ENCODE measurements at regions of chr12 and their contacts with region 1.

Region 1: DNA sequence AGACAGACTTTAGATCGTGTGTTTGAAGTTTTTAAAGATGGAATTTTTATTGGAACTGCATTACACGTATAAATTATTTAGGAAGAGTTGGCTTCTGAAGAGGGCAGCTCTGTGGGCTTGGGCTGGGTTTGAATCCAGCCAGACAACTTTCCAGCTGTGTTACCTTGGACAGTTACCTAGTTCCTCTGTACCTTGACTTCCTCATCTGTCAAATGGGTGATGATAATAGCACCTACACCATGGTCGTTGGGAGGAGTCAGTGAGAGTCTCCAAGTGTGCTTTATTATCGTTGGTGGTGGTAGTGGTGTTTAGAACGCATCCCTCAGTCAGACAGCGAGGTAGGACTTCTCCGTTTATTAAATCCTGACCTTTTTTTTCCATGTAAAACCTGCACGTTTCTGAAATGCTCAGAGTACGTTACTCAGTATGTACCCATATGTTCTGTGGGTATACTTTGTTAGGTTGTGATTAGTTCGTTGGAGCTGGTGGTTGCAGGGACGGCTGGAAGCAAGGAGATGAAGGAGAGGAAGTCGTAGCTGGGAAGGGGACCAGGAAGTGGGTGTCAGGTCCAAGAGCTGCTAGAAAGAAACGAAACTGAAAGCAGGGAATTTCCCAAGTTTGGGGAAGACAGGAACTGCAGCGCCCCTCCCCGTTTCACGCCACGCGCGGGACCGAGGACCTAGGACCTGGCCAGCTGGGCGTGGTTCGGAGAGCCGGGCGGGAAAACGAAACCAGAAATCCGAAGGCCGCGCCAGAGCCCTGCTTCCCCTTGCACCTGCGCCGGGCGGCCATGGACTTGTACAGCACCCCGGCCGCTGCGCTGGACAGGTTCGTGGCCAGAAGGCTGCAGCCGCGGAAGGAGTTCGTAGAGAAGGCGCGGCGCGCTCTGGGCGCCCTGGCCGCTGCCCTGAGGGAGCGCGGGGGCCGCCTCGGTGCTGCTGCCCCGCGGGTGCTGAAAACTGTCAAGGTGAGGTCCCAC is at the start of gene OAS3:
- DNase-seq: peak; percentile 66 to 87 (median 70)
- H3K4me3 ChIP-seq: peak within 1 kb of the TSS; percentile 72 to 84
- H3K4me3 Mint-ChIP-seq: peak within 1 kb of the TSS; percentile 87 to 100 (median 94)
- H3K27ac ChIP-seq: peak within 1 kb of the TSS; percentile 72
- H3K27ac Mint-ChIP-seq: peak within 1 kb of the TSS; percentile 85 to 98 (median 96)
- H3K4me1 ChIP-seq: peaks cover 35% of the 10 kb centered on the region
- H3K4me1 Mint-ChIP-seq: peaks cover 28 to 45% (median 36%) of the 10 kb centered on the region in 4 donors
- H3K27me3 ChIP-seq: no peaks in the 10 kb centered on the region
- H3K27me3 Mint-ChIP-seq: no peaks in the 10 kb centered on the region
- total RNA-seq, gene OAS3: 20.3 to 22.5 TPM

Region 2: DNA sequence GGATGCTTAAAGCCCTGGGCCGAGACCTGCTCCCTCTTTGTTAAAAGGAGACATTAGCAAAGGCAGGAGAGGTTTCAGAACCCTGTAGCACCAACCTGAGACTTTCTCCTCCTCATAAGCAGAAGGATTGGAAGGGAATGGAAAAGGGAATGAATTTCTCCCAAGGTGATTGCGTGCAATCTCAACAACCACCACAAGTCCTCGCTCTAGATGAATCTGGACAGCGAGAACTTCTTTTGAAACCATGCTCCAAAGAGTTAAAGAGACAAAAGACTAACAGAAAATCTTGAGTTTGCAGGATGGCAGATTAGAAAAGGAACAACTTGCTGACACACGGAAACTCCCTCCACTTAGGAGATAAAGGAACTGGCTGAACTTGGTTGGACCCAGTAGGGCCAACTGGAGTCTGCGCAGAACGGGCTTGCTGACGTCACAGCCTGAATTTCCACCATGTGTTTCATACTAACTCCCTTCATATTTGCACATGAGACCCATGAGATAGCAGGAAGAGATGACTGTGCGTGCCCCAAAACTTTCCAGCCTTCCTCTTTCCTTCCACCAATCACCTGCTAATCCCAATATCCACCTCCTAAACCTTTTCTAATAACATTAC is 382.3 kb before region 1 on chr12:
- CTCF ChIA-PET with region 1: no interaction called
- POLR2A ChIA-PET with region 1: no interaction called
- intact Hi-C with region 1: no loop called
- DNase-seq: no peak
- H3K4me3 ChIP-seq: no peak overlapping the region
- H3K4me3 Mint-ChIP-seq: no peak overlapping the region
- H3K27ac ChIP-seq: no peak overlapping the region
- H3K27ac Mint-ChIP-seq: no peak overlapping the region
- H3K4me1 ChIP-seq: no peaks in the 10 kb centered on the region
- H3K4me1 Mint-ChIP-seq: peaks cover 0 to 2% (median under 1%) of the 10 kb centered on the region in 4 donors
- H3K27me3 ChIP-seq: no peaks in the 10 kb centered on the region
- H3K27me3 Mint-ChIP-seq: peaks cover 16 to 18% of the 10 kb centered on the region in 2 donors

Region 3: DNA sequence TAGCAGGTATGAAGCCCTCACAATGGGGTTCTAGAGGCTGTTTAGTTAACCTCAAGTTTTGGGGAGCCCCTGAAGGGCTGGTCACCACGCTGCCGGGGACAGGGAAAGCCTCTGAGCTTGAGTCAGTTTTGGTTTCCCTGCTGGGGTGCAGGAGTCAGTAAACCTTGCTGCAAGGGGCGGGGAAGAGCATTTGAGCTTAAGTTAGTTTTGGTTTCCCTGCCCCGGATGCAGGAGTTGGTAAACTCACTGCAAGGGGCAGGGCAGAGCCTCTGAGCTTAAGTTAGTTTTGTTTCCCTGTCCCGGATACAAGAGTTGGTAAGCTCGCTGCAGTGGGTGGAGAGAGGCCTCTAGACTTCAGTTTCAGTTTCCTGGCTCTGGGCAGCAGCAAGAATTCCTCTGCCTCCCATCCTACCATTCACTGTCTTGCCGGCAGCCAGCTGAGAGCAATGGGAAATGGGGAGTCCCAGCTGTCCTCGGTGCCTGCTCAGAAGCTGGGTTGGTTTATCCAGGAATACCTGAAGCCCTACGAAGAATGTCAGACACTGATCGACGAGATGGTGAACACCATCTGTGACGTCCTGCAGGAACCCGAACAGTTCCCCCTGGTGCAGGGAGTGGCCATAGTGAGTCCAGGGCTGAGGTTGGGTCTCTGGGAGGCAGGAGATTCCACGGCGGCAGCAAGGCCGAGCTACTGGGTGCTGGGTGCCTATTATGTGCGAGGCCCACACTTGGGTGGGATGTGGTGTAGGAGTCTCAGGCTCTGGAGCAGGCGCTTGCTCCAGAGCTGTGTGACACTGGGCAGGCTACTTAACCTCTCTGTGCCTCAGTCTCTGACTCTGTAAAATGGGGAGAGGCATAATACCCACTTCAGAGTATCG is 40.4 kb after region 1 on chr12 and contains the start of gene OAS2:
- CTCF ChIA-PET with region 1: interaction called, 5 read pairs
- POLR2A ChIA-PET with region 1: interaction called, 84 read pairs
- intact Hi-C with region 1: loop called (anchors 1 kb)
- DNase-seq: peak; percentile 82 to 92 (median 87)
- H3K4me3 ChIP-seq: peak within 1 kb of the TSS; percentile 87 to 88
- H3K4me3 Mint-ChIP-seq: peak within 1 kb of the TSS; percentile 88 to 100 (median 99)
- H3K27ac ChIP-seq: peak within 1 kb of the TSS; percentile 91
- H3K27ac Mint-ChIP-seq: peak within 1 kb of the TSS; percentile 97 to 99 (median 99)
- H3K4me1 ChIP-seq: peaks cover 51% of the 10 kb centered on the region
- H3K4me1 Mint-ChIP-seq: peaks cover 28 to 58% (median 45%) of the 10 kb centered on the region in 4 donors
- H3K27me3 ChIP-seq: no peaks in the 10 kb centered on the region
- H3K27me3 Mint-ChIP-seq: no peaks in the 10 kb centered on the region
- total RNA-seq, gene OAS2: 73.5 to 77.4 TPM

Region 4: DNA sequence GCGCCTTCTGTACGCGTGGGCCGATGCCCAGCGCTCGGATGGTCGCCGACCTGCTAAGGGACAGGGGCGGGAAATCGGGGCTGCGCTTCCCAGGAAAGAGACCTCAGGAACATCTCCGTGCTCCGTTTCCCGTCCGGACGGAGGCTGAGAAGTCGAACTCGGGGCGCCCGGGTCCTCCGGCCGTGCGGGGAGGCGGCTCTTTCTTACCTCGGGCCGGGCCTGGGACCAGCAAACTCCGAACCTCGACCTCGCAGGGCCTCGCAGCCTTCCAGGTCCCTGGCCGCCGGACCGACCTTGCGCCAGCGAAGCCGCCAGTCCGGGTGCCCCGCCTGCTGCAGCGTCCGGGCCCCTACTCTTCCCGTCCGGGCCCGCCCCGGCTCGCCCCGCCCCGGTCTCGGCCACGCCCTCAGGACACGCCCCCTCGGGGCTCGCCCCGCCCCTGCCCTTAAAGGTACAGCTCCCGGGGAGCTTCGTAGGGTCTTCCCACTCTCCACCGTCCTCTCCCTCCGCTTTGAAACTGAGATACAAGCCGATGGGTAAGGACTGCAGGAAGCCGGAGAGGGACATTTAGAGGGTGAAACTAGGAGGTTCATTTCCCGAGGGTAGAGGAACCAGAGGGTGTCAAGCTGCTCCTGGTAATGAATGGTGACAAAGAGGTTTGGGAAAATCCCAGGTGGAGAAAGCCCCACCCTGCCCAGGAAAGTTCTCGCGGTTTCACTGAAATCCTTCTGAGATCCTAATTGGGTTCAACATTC is 396.9 kb after region 1 on chr12 and contains the start of gene SLC8B1:
- CTCF ChIA-PET with region 1: no interaction called
- POLR2A ChIA-PET with region 1: no interaction called
- intact Hi-C with region 1: loop called (anchors 1 kb)
- DNase-seq: peak; percentile 75 to 85 (median 76)
- H3K4me3 ChIP-seq: peak within 1 kb of the TSS; percentile 69 to 79
- H3K4me3 Mint-ChIP-seq: peak within 1 kb of the TSS; percentile 92 to 99 (median 98)
- H3K27ac ChIP-seq: peak within 1 kb of the TSS; percentile 50
- H3K27ac Mint-ChIP-seq: peak within 1 kb of the TSS; percentile 84 to 96 (median 89)
- H3K4me1 ChIP-seq: peaks cover 21% of the 10 kb centered on the region
- H3K4me1 Mint-ChIP-seq: peaks cover 19 to 52% (median 36%) of the 10 kb centered on the region in 4 donors
- H3K27me3 ChIP-seq: no peaks in the 10 kb centered on the region
- H3K27me3 Mint-ChIP-seq: no peaks in the 10 kb centered on the region
- total RNA-seq, gene SLC8B1: 91.2 to 93.5 TPM

Measured in CD4-positive, alpha-beta memory T cell (primary cell).